HCT116 (cell line): ENCODE measurements at regions of chr2 and their contacts with region 1.

Region 1: DNA sequence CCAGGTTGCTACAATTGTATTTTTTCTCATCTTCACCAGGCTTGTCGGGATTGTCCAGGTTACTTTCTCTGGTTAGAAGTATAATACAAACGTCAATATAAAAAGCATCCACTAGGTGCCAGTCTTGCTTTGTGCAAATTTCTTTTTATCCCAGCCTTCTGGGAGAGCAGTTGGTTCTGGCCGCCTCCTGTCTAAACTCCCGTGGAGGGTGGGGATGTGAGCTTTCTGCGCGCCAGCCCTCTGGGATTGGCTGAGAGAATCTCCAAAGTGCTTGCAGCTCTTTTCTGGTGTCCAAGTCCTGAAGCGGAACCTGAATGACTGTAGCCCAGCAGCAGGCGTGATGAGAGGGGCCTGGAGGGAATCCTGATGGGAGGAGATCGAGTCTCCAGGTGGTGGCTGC is 22.4 kb upstream of the TOGARAM2 start:
- DNase-seq: peak; percentile 37
- ATAC-seq: peak; percentile 78
- H3K4me3 ChIP-seq: no peak overlapping the region
- H3K27ac ChIP-seq: no peak overlapping the region
- H3K4me1 ChIP-seq: peaks cover 3 to 10% of the 10 kb centered on the region in 2 experiments; a peak in 2 of 4 replicates
- H3K27me3 ChIP-seq: no peaks in the 10 kb centered on the region
- CTCF ChIP-seq: peak; percentile 45 to 87 (median 69)
- POLR2A ChIP-seq: no peak
- RAD21 ChIP-seq: peak; percentile 97

Region 2: DNA sequence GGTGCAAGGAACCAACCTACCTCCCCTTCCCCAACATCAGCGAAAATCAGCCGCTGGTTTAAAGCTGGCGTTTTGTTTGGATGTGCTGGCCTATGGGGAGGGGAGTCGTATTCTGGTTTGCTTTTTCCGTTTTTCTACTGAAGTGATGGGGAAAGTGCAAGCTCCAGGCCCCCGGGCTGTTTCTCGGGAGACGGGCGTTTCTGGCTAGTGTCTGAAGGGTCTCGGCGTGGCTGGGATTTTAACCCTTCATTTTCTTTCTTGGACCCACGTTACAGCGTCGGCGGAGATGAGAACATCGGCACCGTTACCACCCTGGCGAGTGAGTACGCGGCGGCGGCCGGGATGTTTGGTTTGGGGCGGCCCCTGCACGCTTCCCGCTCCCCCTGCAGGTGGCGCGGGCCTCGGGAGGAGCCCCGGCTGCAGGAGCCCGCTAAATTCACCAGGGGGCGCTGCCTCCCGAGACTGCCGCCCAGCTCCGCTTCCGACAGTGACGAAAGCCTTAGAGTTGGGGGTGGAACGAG is 392.1 kb before region 1 on chr2:
- CTCF ChIA-PET with region 1: no interaction called
- POLR2A ChIA-PET with region 1: no interaction called
- RAD21 ChIA-PET with region 1: no interaction called
- intact Hi-C with region 1: loop called (anchors 10 kb)
- DNase-seq: peak; percentile 60
- ATAC-seq: peak; percentile 94
- H3K4me3 ChIP-seq: peak overlapping the region; percentile 46 to 64
- H3K27ac ChIP-seq: no peak overlapping the region
- H3K4me1 ChIP-seq: peaks cover 0 to 11% of the 10 kb centered on the region in 2 experiments; a peak in 3 of 4 replicates
- H3K27me3 ChIP-seq: no peaks in the 10 kb centered on the region
- CTCF ChIP-seq: peak; percentile 97 to 99 (median 98)
- POLR2A ChIP-seq: no peak
- RAD21 ChIP-seq: peak; percentile 95

Region 3: GRCh38 chr2:28674062-28674712 is 284.5 kb before region 1 on chr2:
- CTCF ChIA-PET with region 1: no interaction called
- POLR2A ChIA-PET with region 1: no interaction called
- RAD21 ChIA-PET with region 1: no interaction called
- intact Hi-C with region 1: no loop called
- DNase-seq: no peak
- ATAC-seq: no peak
- H3K4me3 ChIP-seq: no peak overlapping the region
- H3K27ac ChIP-seq: no peak overlapping the region
- H3K4me1 ChIP-seq: no peaks in the 10 kb centered on the region
- H3K27me3 ChIP-seq: no peaks in the 10 kb centered on the region
- CTCF ChIP-seq: no peak
- POLR2A ChIP-seq: no peak
- RAD21 ChIP-seq: no peak

Region 4: GRCh38 chr2:28981016-28981441 is 22.3 kb after region 1 on chr2 and contains the start of gene TOGARAM2:
- CTCF ChIA-PET with region 1: no interaction called
- POLR2A ChIA-PET with region 1: no interaction called
- RAD21 ChIA-PET with region 1: no interaction called
- intact Hi-C with region 1: no loop called
- DNase-seq: no peak
- ATAC-seq: no peak
- H3K4me3 ChIP-seq: no peak within 1 kb of the TSS
- H3K27ac ChIP-seq: no peak within 1 kb of the TSS
- H3K4me1 ChIP-seq: peaks cover 0 to 12% of the 10 kb centered on the region in 2 experiments; a peak in 1 of 4 replicates
- H3K27me3 ChIP-seq: no peaks in the 10 kb centered on the region
- CTCF ChIP-seq: no peak
- POLR2A ChIP-seq: no peak
- RAD21 ChIP-seq: no peak
- total RNA-seq, gene TOGARAM2: 0.76 TPM

Region 5: DNA sequence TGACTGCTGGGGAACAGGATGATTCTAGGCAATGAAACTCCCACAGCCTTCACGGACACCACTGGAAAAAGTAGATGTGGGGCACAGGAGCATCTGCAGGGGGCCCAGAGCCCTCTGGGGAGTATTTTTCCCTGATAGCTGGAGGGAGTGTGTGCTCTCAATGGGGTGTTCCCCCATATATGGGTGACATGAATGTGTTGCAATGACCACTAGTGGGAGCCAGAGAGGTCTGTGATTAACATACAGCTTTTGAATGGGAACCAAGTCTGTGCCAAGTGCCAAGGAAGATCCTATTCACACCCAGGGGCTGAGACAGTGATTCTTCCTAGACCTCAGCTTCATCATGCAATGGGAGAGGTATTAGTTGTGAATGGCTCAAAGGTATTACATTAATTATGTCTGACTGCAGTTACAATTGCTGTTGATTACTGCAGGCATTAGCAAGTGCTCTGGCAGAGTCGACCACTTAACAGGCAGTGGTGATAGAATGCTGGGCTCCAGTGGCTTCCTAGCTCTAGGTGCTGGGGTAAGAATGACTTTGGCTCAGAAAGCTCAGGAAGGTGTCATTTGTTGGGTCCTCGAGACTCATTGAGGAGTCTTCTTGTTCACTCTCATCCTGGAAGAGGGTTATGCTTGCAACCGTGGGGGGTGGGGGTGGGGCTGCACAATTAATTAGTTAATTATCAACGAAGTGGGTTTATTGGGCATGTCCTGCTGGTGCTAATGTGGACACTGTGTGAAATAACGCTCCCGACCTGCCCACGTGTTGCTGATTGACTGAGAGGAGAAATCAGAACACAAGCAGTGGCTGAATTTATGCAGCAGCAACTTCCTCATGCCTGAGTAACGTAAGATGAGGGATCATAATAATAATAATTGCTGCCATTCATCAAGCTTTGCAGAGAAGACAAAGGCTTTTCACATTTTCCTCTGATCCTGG is 350.7 kb after region 1 on chr2:
- CTCF ChIA-PET with region 1: no interaction called
- POLR2A ChIA-PET with region 1: no interaction called
- RAD21 ChIA-PET with region 1: no interaction called
- intact Hi-C with region 1: loop called (anchors 10 kb)
- DNase-seq: peak; percentile 44
- ATAC-seq: peak; percentile 95
- H3K4me3 ChIP-seq: no peak overlapping the region
- H3K27ac ChIP-seq: no peak overlapping the region
- H3K4me1 ChIP-seq: no peaks in the 10 kb centered on the region
- H3K27me3 ChIP-seq: peaks cover 62% of the 10 kb centered on the region
- CTCF ChIP-seq: peak; percentile 32 to 81 (median 72); a peak in 5 of 6 replicates
- POLR2A ChIP-seq: no peak
- RAD21 ChIP-seq: peak; percentile 53

Region 6: DNA sequence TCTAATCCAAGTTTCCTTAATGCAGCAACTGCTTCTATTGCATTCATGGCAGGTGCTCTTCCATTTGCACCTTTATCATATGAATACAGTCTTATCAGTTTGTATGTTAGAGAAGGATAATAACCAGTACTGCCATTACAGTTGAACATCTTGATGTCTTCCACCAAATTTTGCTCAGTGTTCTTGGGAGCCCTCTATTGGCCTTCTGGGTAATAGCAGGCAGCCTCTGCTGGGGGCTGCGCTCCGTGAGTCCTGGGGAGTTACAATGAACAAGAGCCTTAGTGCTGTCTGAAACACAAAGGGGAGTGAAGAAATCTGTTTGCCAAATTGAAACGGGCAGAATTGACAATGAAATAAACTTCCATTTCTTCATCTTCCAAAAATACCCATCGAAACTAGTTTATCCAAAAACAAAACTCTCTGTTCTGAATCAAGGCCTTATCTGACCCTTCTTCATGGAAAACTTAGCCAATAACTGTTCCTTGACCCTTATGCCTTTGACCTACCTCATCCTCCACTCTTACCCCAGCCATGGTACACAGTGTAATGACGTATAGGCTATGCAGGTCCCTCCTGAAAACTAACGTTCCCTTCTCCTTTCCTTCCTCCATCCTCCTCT is 882.8 kb after region 1 on chr2:
- CTCF ChIA-PET with region 1: no interaction called
- POLR2A ChIA-PET with region 1: no interaction called
- RAD21 ChIA-PET with region 1: no interaction called
- intact Hi-C with region 1: loop called (anchors 5 kb)
- DNase-seq: peak; percentile 3
- ATAC-seq: peak; percentile 78
- H3K4me3 ChIP-seq: no peak overlapping the region
- H3K27ac ChIP-seq: no peak overlapping the region
- H3K4me1 ChIP-seq: no peaks in the 10 kb centered on the region
- H3K27me3 ChIP-seq: peaks cover 54% of the 10 kb centered on the region
- CTCF ChIP-seq: peak; percentile 48 to 90 (median 86); a peak in 5 of 6 replicates
- POLR2A ChIP-seq: no peak
- RAD21 ChIP-seq: peak; percentile 77

Region 7: GRCh38 chr2:30072250-30072842 is 1113.7 kb after region 1 on chr2:
- CTCF ChIA-PET with region 1: interaction called, 4 read pairs
- POLR2A ChIA-PET with region 1: no interaction called
- RAD21 ChIA-PET with region 1: no interaction called
- intact Hi-C with region 1: loop called (anchors 2 kb)
- DNase-seq: peak; percentile 57
- ATAC-seq: peak; percentile 98
- H3K4me3 ChIP-seq: no peak overlapping the region
- H3K27ac ChIP-seq: no peak overlapping the region
- H3K4me1 ChIP-seq: no peaks in the 10 kb centered on the region
- H3K27me3 ChIP-seq: peaks cover 23% of the 10 kb centered on the region
- CTCF ChIP-seq: peak; percentile 56 to 79 (median 79); a peak in 5 of 6 replicates
- POLR2A ChIP-seq: no peak
- RAD21 ChIP-seq: peak; percentile 81